ENCODE measurements at regions of chr1 and their contacts with region 1.

Region 1: DNA sequence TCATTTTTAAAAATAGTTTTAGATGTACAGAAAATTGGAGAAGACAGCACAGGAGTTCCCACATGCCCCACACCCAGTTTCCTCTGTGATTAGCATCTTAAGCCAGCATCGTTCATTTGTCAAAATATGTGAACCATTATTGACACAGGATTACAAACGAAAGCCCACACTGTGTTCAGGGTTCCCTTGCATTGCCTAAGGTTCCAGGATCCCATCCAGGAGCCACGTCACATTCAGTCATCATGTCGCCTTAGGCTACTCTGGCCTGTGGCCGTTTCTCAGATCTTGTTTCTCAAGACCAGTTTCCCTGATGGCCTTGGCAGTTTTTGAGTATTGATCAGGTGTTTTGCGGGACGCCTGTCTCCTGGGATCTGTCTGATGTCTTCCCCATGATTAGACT is 34.7 kb upstream of the TNFRSF1B start:
- DNase-seq: no peak
- ATAC-seq: no peak
- H3K4me3 ChIP-seq: no peak overlapping the region
- H3K4me3 Mint-ChIP-seq: peak overlapping the region; percentile 13
- H3K27ac ChIP-seq: peak overlapping the region; percentile 95
- H3K27ac Mint-ChIP-seq: peak overlapping the region; percentile 91 to 96
- H3K4me1 ChIP-seq: peaks cover 37% of the 10 kb centered on the region
- H3K4me1 Mint-ChIP-seq: peaks cover 15 to 21% of the 10 kb centered on the region in 2 donors
- H3K27me3 ChIP-seq: no peaks in the 10 kb centered on the region
- H3K27me3 Mint-ChIP-seq: no peaks in the 10 kb centered on the region
- CTCF ChIP-seq: no peak

Region 2: DNA sequence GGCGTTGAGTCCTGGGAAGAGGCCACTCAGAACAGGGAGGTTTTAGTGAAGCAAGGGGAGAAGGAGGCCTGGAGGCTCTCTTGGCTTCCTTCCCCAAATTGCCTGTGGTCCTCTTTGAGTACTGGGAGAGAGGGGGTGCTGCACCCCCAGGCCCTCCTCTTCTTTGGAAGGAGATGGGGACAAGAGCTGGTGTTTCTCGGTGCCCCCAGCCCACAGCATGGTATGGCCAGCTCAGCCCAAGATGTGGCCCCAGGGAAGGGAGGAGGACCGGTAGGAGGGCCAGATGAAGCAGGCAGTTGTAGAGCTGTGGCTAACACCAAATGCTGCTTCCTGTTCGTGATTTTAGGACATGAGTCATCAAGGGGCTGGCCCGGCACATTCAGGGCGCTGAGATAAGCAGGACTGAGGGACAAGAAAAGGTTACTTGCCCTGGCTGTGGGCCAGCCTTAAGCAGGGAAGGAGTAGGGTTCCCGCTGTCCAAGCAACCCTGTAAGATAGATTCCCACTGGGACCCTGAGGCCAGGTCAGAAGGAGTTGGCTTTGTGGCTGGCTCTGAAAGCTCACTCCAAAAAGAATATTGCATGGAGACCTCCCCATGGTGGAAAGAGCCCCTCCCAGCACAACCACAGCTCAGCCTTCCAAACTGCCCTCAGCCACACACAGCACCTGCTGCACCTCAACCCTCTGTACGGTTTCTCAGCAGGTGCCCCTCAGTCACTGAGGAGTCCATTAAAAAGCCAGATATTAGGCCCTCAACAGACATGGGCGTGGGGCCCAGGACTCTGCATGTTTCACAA is 29.8 kb after region 1 on chr1:
- intact Hi-C with region 1: loop called (anchors 1 kb)
- DNase-seq: peak; percentile 73 to 90
- ATAC-seq: peak; percentile 78 to 95 (median 89)
- H3K4me3 ChIP-seq: no peak overlapping the region
- H3K4me3 Mint-ChIP-seq: peak overlapping the region; percentile 70
- H3K27ac ChIP-seq: peak overlapping the region; percentile 86
- H3K27ac Mint-ChIP-seq: peak overlapping the region; percentile 93 to 97
- H3K4me1 ChIP-seq: peaks cover 97% of the 10 kb centered on the region
- H3K4me1 Mint-ChIP-seq: peaks cover 59 to 69% of the 10 kb centered on the region in 2 donors
- H3K27me3 ChIP-seq: no peaks in the 10 kb centered on the region
- H3K27me3 Mint-ChIP-seq: no peaks in the 10 kb centered on the region
- CTCF ChIP-seq: no peak

Region 3: DNA sequence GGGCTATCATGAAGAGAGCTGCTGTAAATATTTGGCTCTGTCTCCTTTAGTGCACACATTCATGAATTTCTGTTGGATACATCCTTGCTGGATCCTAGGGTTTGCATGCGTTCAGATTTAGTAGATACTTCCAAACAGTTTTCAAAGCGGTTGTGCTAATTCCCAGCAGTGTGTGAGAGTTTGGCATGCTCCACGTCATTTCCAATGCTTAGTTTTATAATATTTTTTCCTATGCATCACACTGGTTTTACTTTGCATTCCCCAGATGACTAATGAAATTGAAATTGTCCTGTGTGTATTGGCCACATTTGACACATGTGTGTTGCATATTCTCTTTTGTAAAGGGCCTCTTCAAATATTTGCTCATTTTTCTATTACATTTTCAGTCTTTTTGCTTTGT is 565.3 kb after region 1 on chr1:
- intact Hi-C with region 1: no loop called
- DNase-seq: no peak
- ATAC-seq: no peak
- H3K4me3 ChIP-seq: no peak overlapping the region
- H3K4me3 Mint-ChIP-seq: no peak overlapping the region
- H3K27ac ChIP-seq: no peak overlapping the region
- H3K27ac Mint-ChIP-seq: no peak overlapping the region
- H3K4me1 ChIP-seq: no peaks in the 10 kb centered on the region
- H3K4me1 Mint-ChIP-seq: no peaks in the 10 kb centered on the region
- H3K27me3 ChIP-seq: peaks cover 6% of the 10 kb centered on the region
- H3K27me3 Mint-ChIP-seq: peaks cover 19 to 34% of the 10 kb centered on the region in 2 donors
- CTCF ChIP-seq: no peak